Psoas muscle (tissue), 8 donors: ENCODE measurements at regions of chr1 and their contacts with region 1.

Region 1: GRCh38 chr1:31593770-31594632 is 17.7 kb downstream of the TINAGL1 start:
- DNase-seq: peak; percentile 80 to 85
- ATAC-seq: peak; percentile 90 to 93 (median 91)
- H3K4me3 ChIP-seq: no peak overlapping the region
- H3K27ac ChIP-seq: no peak overlapping the region
- H3K4me1 ChIP-seq: no peaks in the 10 kb centered on the region
- H3K27me3 ChIP-seq: peaks cover 0 to 13% (median 4%) of the 10 kb centered on the region in 3 donors
- CTCF ChIP-seq: peak; percentile 88

Region 2: GRCh38 chr1:31564134-31564989 is 29.6 kb before region 1 on chr1:
- intact Hi-C with region 1: loop called in 1 of 2 experiments (anchors 1 kb)
- DNase-seq: no peak
- ATAC-seq: peak; percentile 66 to 89 (median 76)
- H3K4me3 ChIP-seq: no peak overlapping the region
- H3K27ac ChIP-seq: no peak overlapping the region
- H3K4me1 ChIP-seq: peaks cover 4% of the 10 kb centered on the region
- H3K27me3 ChIP-seq: no peaks in the 10 kb centered on the region
- CTCF ChIP-seq: peak; percentile 95

Region 3: DNA sequence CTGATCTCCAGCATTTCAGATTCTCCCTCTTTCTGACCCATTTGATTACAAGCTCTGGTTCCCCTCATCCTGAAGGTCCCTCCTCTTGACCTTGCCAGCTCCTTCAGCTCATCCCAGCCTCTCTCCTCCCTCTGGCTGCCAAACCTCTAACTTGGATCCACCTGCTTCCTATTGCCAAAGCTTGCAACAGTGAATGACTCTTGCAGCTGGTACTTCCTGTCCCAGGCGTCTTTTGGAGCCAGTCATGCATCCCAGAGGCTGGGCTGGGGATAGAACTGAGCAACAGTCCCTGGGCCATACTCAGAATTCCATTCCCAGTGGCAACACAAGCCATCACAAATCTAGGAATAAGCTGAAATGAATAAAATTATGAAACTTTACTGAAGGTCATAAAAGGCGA is 249.5 kb after region 1 on chr1:
- intact Hi-C with region 1: no loop called
- DNase-seq: peak; percentile 30 to 61
- ATAC-seq: peak; percentile 66 to 93 (median 90)
- H3K4me3 ChIP-seq: no peak overlapping the region
- H3K27ac ChIP-seq: no peak overlapping the region
- H3K4me1 ChIP-seq: no peaks in the 10 kb centered on the region
- H3K27me3 ChIP-seq: no peaks in the 10 kb centered on the region
- CTCF ChIP-seq: no peak

Region 4: GRCh38 chr1:33161061-33161681 is 1567.2 kb after region 1 on chr1:
- intact Hi-C with region 1: no loop called
- DNase-seq: peak; percentile 60 to 74
- ATAC-seq: peak in 3 of 4 donors; percentile 20 to 49 (median 31)
- H3K4me3 ChIP-seq: no peak overlapping the region
- H3K27ac ChIP-seq: no peak overlapping the region
- H3K4me1 ChIP-seq: no peaks in the 10 kb centered on the region
- H3K27me3 ChIP-seq: no peaks in the 10 kb centered on the region
- CTCF ChIP-seq: no peak